A673 (cell line): ENCODE measurements at regions of chr9 and their contacts with region 1.

Region 1: DNA sequence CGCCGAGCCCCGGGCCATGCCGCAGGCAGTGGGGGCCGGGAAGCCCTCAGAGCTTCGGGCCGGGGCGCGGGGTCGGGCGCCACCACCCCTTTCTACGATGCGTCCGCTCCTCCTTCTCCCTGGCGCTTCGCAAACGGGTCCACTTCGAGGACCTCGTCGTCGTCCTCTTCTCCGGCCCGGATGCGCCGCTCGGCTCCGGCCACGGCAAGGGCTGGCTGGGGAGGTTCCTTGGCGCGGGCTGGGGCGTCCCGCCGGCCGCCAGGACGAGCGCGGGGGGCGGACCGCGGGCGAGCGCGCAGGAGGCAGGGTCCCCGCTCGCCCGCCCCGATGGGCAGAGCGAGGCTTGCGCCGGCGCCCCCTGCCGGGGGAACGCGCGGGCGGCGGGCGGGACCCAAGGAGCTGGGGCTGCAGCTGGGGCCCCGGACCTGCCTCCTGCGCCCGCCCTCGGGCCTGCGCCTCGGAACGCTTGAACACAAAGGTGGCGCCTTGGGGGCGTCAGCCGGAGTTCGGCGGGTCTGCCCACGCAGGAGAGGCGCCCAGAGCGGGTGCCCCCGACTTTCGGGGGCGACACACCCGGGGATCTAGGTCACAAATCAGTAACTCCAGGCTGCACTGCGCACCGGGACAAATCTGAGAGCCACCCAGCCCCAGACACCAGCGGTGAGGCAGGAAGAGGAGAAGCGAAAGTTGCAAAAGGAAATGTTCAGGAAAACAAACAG is at the start of gene ROR2:
- DNase-seq: peak; percentile 88
- H3K4me3 ChIP-seq: peak within 1 kb of the TSS; percentile 65
- H3K27ac ChIP-seq: peak within 1 kb of the TSS; percentile 57
- H3K4me1 ChIP-seq: peaks cover 32% of the 10 kb centered on the region
- H3K27me3 ChIP-seq: no peaks in the 10 kb centered on the region
- CTCF ChIP-seq: peak; percentile 47; the same call in 1 of the 2 replicates
- total RNA-seq, gene ROR2: 12.3 and 17.8 TPM in 2 replicates

Region 2: GRCh38 chr9:91714020-91714721 is 235.9 kb before region 1 on chr9:
- CTCF ChIA-PET with region 1: interaction called, 12 read pairs
- POLR2A ChIA-PET with region 1: no interaction called
- intact Hi-C with region 1: no loop called
- DNase-seq: peak; percentile 86
- H3K4me3 ChIP-seq: peak overlapping the region; percentile 46
- H3K27ac ChIP-seq: no peak overlapping the region
- H3K4me1 ChIP-seq: peaks cover 16% of the 10 kb centered on the region
- H3K27me3 ChIP-seq: no peaks in the 10 kb centered on the region
- CTCF ChIP-seq: no peak

Region 3: DNA sequence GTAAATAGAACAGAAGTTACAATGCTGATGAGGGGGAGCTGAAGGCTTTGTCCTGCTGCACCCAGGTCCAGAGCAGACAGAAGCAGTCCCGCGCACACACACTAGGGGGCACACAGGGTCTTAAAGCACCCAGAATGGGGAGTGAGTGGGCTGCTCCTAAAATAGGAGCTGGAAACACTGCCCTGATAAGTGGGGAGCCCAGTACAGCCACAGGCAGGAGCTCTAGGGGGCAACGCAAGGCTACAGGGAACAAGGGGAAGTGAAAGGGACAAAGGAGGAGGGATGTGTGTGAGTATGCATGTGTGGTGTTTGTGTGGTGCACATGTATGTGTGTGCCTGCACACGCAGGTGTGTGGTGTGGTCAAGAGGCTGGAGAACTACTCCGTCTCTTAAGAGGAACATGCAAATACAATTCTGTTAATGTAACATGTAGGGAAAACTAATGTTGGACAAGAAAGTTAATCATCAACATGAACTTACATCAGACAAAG is 191.6 kb before region 1 on chr9:
- CTCF ChIA-PET with region 1: interaction called, 14 read pairs
- POLR2A ChIA-PET with region 1: no interaction called
- intact Hi-C with region 1: loop called (anchors 1 kb)
- DNase-seq: peak; percentile 80
- H3K4me3 ChIP-seq: no peak overlapping the region
- H3K27ac ChIP-seq: no peak overlapping the region
- H3K4me1 ChIP-seq: no peaks in the 10 kb centered on the region
- H3K27me3 ChIP-seq: no peaks in the 10 kb centered on the region
- CTCF ChIP-seq: peak; percentile 88

Region 4: DNA sequence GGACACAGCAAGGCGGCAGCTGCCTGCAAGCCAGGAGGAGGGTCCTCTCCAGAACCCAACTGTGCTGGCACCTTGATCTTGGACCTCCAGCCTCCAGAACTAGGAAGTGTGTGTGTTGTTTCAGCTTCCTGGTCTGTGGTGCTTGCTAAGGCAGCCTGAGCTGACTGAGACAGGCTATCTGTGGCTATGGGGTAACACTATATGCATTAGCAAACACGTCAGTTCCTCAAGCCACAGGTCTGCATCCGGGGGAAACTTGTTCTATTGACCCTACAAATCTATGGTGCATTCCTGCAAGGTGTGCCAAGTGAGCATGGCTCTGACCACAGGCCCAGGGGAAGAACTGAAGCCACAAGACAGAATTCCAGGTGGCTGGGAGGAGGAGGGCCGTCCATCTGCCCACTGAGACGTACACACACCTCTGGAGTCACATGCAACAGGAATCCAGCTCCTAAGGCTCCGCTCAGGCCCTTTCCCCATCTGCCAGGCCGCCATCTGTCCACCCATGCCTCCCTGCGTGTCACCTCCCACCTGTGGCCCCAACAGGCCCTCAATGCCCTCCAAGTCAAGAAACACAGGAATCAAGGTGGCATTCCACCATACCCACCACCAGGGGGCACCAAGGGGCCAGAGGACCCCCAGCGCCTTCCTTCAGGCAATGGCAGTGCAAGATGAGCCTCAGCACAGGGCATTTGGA is 174.9 kb before region 1 on chr9:
- CTCF ChIA-PET with region 1: interaction called, 5 read pairs
- POLR2A ChIA-PET with region 1: no interaction called
- intact Hi-C with region 1: loop called (anchors 1 kb)
- DNase-seq: peak; percentile 77
- H3K4me3 ChIP-seq: no peak overlapping the region
- H3K27ac ChIP-seq: no peak overlapping the region
- H3K4me1 ChIP-seq: peaks cover 10% of the 10 kb centered on the region
- H3K27me3 ChIP-seq: no peaks in the 10 kb centered on the region
- CTCF ChIP-seq: peak; percentile 92

Region 5: GRCh38 chr9:91795598-91796241 is 154.4 kb before region 1 on chr9:
- CTCF ChIA-PET with region 1: no interaction called
- POLR2A ChIA-PET with region 1: no interaction called
- intact Hi-C with region 1: loop called (anchors 2 kb)
- DNase-seq: peak; percentile 87
- H3K4me3 ChIP-seq: no peak overlapping the region
- H3K27ac ChIP-seq: peak overlapping the region; percentile 58
- H3K4me1 ChIP-seq: peaks cover 32% of the 10 kb centered on the region
- H3K27me3 ChIP-seq: peaks cover 9% of the 10 kb centered on the region
- CTCF ChIP-seq: no peak

Region 6: GRCh38 chr9:91847581-91848091 is 102.5 kb before region 1 on chr9:
- CTCF ChIA-PET with region 1: no interaction called
- POLR2A ChIA-PET with region 1: interaction called, 3 read pairs
- intact Hi-C with region 1: loop called (anchors 5 kb)
- DNase-seq: peak; percentile 86
- H3K4me3 ChIP-seq: no peak overlapping the region
- H3K27ac ChIP-seq: peak overlapping the region; percentile 8
- H3K4me1 ChIP-seq: peaks cover 28% of the 10 kb centered on the region
- H3K27me3 ChIP-seq: no peaks in the 10 kb centered on the region
- CTCF ChIP-seq: no peak

Region 7: GRCh38 chr9:91898451-91899218 is 51.5 kb before region 1 on chr9:
- CTCF ChIA-PET with region 1: no interaction called
- POLR2A ChIA-PET with region 1: no interaction called
- intact Hi-C with region 1: loop called (anchors 1 kb)
- DNase-seq: peak; percentile 97
- H3K4me3 ChIP-seq: no peak overlapping the region
- H3K27ac ChIP-seq: peak overlapping the region; percentile 80
- H3K4me1 ChIP-seq: peaks cover 98% of the 10 kb centered on the region
- H3K27me3 ChIP-seq: no peaks in the 10 kb centered on the region
- CTCF ChIP-seq: no peak